ENCODE measurements at regions of chr1 and their contacts with region 1.

Region 1: GRCh38 chr1:153990468-153991150 is at the start of gene RPS27:
- DNase-seq: peak; percentile 93
- H3K4me3 Mint-ChIP-seq: peak within 1 kb of the TSS; percentile 97
- H3K27ac Mint-ChIP-seq: peak within 1 kb of the TSS; percentile 99
- H3K4me1 Mint-ChIP-seq: peaks cover 45% of the 10 kb centered on the region
- H3K27me3 Mint-ChIP-seq: peaks cover 3% of the 10 kb centered on the region
- total RNA-seq, gene RPS27: 1,861 to 1,992 TPM

Region 2: GRCh38 chr1:153572569-153573015 is 418.0 kb before region 1 on chr1:
- CTCF ChIA-PET with region 1: no interaction called
- POLR2A ChIA-PET with region 1: interaction called, 4 read pairs
- intact Hi-C with region 1: loop called (anchors 2 kb)
- DNase-seq: peak; percentile 83
- H3K4me3 Mint-ChIP-seq: no peak overlapping the region
- H3K27ac Mint-ChIP-seq: peak overlapping the region; percentile 64
- H3K4me1 Mint-ChIP-seq: peaks cover 54% of the 10 kb centered on the region
- H3K27me3 Mint-ChIP-seq: peaks cover 9% of the 10 kb centered on the region

Region 3: GRCh38 chr1:153796791-153797659 is 193.6 kb before region 1 on chr1:
- CTCF ChIA-PET with region 1: interaction called, 74 read pairs
- POLR2A ChIA-PET with region 1: interaction called, 3 read pairs
- intact Hi-C with region 1: loop called (anchors 1 kb)
- DNase-seq: peak; percentile 89
- H3K4me3 Mint-ChIP-seq: no peak overlapping the region
- H3K27ac Mint-ChIP-seq: no peak overlapping the region
- H3K4me1 Mint-ChIP-seq: peaks cover 3% of the 10 kb centered on the region
- H3K27me3 Mint-ChIP-seq: peaks cover 1% of the 10 kb centered on the region

Region 4: GRCh38 chr1:153922972-153923925 is 67.4 kb before region 1 on chr1 and contains the start of gene GATAD2B:
- CTCF ChIA-PET with region 1: interaction called, 13 read pairs
- POLR2A ChIA-PET with region 1: interaction called, 14 read pairs
- intact Hi-C with region 1: loop called (anchors 1 kb)
- DNase-seq: peak; percentile 99
- H3K4me3 Mint-ChIP-seq: peak within 1 kb of the TSS; percentile 77
- H3K27ac Mint-ChIP-seq: peak within 1 kb of the TSS; percentile 96
- H3K4me1 Mint-ChIP-seq: peaks cover 38% of the 10 kb centered on the region
- H3K27me3 Mint-ChIP-seq: no peaks in the 10 kb centered on the region
- total RNA-seq, gene GATAD2B: 66.4 to 67.9 TPM

Region 5: DNA sequence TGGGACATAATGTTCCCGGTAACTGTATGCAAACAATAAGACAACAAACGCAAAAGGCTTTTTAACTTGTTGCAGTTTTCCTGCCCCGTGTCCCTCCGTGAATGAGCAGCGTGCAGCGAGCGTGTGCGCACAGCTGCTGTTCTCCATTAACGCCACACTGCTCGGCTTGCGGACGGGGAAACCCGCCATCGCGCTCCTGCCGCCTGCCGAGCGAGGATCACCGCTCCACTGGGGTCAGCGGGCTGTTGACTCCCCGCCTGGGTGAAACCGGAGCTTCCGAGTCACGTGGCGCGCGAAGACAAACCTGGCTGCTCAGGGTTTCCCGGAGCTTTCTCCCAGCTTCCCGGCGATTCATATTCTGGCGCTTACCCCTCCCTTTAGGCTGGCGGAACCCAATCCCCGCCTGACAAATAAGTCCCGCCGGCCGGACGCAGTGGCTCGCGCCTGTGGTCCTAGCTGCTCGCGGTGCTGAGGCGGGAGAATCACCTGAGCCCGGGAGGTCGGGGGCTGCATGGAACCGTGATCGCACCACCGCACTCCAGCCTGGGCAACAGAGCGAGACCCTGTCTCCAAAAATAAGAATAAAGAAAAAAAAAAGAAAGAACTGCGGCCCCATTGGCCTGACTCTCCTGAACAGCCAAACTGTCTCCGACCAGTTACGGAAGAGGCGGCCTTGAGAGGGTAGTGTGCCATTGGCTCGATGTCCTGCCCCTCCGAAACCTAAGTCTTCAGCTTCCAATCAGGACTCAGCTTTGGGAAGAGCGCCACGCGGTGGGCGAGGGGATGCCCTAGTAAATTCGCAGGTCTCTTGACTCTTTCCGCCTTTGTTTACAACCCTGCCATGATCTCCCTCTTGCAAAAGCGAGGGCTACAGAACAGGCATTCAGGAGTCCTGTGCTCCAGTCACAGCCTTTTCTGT is 23.3 kb before region 1 on chr1 and contains the start of gene CREB3L4:
- CTCF ChIA-PET with region 1: interaction called, 20 read pairs
- POLR2A ChIA-PET with region 1: interaction called, 16 read pairs
- intact Hi-C with region 1: loop called (anchors 1 kb)
- DNase-seq: peak; percentile 92
- H3K4me3 Mint-ChIP-seq: peak within 1 kb of the TSS; percentile 87
- H3K27ac Mint-ChIP-seq: peak within 1 kb of the TSS; percentile 90
- H3K4me1 Mint-ChIP-seq: peaks cover 41% of the 10 kb centered on the region
- H3K27me3 Mint-ChIP-seq: no peaks in the 10 kb centered on the region
- total RNA-seq, gene CREB3L4: 8.5 to 8.7 TPM

Region 6: DNA sequence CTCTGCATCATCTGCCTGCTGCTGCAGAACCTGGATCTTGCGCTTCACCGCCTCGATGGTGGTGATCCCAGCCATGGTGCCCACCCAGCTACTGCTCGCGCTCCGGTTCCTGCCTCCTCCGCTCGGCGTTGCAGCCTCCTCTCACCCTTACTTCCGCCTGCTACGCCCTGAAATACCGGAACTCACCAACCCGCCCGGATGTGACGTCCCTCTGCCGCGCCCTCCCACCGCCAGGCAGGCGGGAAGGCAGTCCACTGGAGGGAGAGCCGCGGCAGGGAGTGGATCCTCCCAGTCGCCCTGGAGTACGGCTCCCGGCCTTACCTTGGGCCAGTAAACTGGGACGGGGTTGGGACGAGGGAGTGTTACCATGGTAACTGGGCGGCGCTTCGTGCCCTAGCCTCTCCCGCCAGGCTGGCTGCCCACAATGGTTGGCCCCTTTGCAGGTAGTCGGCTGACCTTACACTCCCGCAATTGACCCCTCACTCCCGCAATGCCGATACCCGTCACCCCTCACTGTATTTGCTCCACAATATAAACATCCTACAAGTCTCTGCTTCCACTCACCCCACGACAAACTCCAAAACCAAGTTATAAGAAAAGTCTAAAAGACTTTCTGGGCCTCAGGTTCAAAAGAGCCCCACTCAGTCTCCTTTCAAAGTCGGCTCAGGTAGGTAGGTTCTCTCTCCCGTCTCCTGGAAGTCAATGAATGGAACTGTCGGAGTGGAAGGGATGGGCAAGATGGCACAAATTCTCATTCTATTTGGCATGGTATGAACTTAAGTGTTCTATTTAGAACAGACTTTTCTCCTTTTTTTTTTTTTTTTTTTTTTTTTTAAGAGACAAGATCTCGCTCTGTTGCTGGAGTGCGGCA is 192.7 kb after region 1 on chr1:
- CTCF ChIA-PET with region 1: no interaction called
- POLR2A ChIA-PET with region 1: interaction called, 5 read pairs
- intact Hi-C with region 1: loop called (anchors 2 kb)
- DNase-seq: peak; percentile 98
- H3K4me3 Mint-ChIP-seq: peak overlapping the region; percentile 98
- H3K27ac Mint-ChIP-seq: peak overlapping the region; percentile 96
- H3K4me1 Mint-ChIP-seq: peaks cover 37% of the 10 kb centered on the region
- H3K27me3 Mint-ChIP-seq: no peaks in the 10 kb centered on the region